ENCODE measurements at regions of chr14 and their contacts with region 1.

Region 1: GRCh38 chr14:30214461-30215090 is 286.9 kb upstream of the PRKD1 start:
- DNase-seq: no peak
- H3K4me3 ChIP-seq: peak overlapping the region in 1 of 2 donors; percentile 23
- H3K27ac ChIP-seq: no peak overlapping the region
- H3K4me1 ChIP-seq: peaks cover 0 to 3% of the 10 kb centered on the region in 2 donors
- H3K27me3 ChIP-seq: no peaks in the 10 kb centered on the region
- CTCF ChIP-seq: peak; percentile 36 to 66 (median 65)

Region 2: DNA sequence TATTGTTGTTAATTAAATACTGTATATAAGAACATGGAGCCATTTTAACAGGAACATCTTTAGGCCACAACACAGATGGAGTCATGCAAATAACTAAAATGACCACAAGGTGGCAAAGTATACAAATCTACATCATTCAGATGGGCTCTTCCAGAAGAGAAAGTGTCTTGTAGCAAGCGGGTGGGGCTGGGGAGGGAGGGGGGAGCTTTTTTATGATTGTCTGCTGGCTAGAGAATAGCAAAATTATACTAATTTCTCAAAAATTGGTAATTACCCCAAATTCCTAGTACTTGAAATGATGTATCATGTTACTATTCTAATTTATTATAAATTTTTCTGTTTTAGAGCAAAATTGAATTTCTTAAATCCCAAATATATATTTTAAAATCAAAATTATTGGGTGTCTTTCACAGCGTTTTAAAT is 665.6 kb before region 1 on chr14:
- intact Hi-C with region 1: loop called (anchors 1 kb)
- DNase-seq: no peak
- H3K4me3 ChIP-seq: no peak overlapping the region
- H3K27ac ChIP-seq: no peak overlapping the region
- H3K4me1 ChIP-seq: no peaks in the 10 kb centered on the region
- H3K27me3 ChIP-seq: no peaks in the 10 kb centered on the region
- CTCF ChIP-seq: peak; percentile 27 to 68 (median 55)

Region 3: DNA sequence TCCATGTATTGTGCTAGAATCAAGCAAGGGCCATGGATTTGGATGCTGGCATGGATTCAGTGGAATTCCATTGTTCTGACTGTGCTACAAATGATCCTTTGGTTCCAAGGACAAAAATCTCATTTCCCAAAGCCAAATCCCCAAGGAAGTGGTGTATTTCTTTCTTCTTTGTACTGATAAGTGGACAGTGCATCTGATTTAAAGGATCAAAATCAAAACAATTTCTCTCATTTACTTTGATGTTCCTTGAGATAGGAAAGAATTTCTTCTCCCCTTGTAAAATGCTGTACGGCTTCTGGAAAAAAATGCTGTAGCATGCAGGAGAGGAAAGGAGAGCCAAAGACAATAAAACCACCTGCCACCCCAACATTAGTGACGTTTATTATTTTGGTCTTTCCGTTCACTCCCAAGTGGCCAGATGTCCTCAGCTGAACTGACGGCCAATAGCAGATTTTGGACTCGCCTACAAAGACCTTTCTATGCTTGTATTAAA is 472.6 kb before region 1 on chr14:
- intact Hi-C with region 1: loop called (anchors 10 kb)
- DNase-seq: peak in 1 of 2 donors; percentile 68
- H3K4me3 ChIP-seq: peak overlapping the region in 1 of 2 donors; percentile 18
- H3K27ac ChIP-seq: peak overlapping the region in 1 of 2 donors; percentile 49
- H3K4me1 ChIP-seq: peaks cover 0 to 18% of the 10 kb centered on the region in 2 donors
- H3K27me3 ChIP-seq: no peaks in the 10 kb centered on the region
- CTCF ChIP-seq: no peak

Region 4: DNA sequence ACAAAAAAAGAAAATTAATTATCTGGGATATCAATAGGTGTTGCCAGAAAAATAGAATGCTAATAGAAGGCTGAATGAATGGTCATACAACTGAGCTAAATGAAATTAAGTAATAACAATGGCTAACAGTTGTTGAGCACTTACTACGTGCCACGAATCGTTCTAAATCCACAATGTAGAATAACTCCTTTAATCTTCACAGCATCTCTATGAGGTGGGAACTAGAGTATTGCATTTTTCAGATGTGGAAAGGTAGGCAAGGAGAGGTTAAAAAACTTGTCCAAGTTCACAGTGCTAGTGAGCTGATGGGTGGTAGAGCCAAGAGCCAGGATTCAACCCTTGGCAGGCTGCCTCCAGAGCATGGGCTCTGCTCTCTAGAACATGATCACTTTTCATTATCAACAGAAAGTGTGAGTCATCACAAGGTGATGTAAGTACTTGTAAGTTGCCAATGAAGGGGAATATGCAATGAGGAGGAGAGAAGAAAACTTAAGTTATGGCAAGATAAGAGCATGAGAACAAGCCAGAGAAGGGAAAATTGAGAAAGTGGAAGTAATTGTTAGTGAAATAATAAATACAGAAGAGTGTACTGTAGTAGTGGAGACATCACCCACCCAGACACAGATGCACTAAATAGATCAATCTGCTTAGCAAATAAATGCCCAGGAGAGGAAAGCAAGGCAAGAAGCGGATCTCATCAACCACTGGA is 409.0 kb before region 1 on chr14:
- intact Hi-C with region 1: loop called (anchors 10 kb)
- DNase-seq: peak in 1 of 2 donors; percentile 76
- H3K4me3 ChIP-seq: no peak overlapping the region
- H3K27ac ChIP-seq: peak overlapping the region in 1 of 2 donors; percentile 30
- H3K4me1 ChIP-seq: peaks cover 0 to 8% of the 10 kb centered on the region in 2 donors
- H3K27me3 ChIP-seq: no peaks in the 10 kb centered on the region
- CTCF ChIP-seq: no peak

Region 5: DNA sequence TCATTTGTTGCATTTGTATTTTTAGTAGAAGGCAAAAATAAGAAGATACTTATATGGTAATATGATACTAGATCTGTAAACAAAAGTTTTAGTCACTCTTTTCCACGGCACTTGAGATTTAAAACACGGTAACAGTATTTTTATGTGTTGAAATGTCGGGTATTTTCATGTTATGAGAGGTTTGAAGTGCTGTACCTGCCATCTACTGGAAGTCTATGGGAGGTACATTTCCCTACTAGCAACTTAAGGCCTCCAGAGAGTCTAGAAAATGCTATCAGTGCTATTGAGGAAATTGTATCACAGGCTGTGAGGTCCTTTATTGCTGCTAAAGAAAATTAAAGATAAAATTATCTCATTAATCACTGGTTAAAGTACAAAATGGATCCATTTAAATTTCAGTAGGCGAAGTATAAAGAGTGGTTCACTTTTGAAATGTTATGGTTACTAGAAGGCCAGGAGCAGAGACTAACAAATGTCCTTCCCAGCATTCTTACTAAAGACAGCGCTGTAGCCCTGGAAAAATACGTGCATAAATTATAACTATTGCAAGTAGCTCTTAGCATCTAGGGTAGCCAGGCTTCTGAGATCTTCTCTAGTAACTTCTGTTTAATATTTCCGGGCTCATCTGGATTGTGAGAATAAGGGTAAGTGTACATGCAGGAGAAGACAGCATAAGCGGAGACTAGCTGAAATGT is 209.3 kb before region 1 on chr14:
- intact Hi-C with region 1: loop called (anchors 2 kb)
- DNase-seq: no peak
- H3K4me3 ChIP-seq: peak overlapping the region in 1 of 2 donors; percentile 21
- H3K27ac ChIP-seq: no peak overlapping the region
- H3K4me1 ChIP-seq: no peaks in the 10 kb centered on the region
- H3K27me3 ChIP-seq: no peaks in the 10 kb centered on the region
- CTCF ChIP-seq: peak; percentile 48 to 83 (median 64)

Region 6: DNA sequence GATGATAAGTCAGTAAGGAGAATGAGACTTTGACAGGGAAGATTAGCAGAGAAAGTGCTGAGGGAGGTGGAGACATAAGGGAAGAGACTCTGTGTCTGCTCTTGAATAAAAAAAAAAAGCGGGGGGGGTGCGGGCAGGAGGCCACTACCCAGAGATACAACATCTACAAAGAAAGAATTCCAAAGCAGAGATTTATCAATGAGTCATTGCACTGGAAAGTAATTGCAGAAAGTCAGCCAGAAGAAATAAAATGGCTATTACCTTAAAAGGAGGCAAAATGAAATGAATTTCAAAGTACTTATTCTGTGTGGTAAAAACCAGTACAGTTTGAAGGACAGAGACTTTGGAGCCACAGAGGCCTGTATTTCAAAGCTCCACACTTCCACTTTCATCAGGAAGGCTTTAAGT is 19.8 kb before region 1 on chr14:
- intact Hi-C with region 1: loop called (anchors 2 kb)
- DNase-seq: no peak
- H3K4me3 ChIP-seq: peak overlapping the region in 1 of 2 donors; percentile 9
- H3K27ac ChIP-seq: peak overlapping the region; percentile 68 to 86
- H3K4me1 ChIP-seq: peaks cover 3 to 22% of the 10 kb centered on the region in 2 donors
- H3K27me3 ChIP-seq: no peaks in the 10 kb centered on the region
- CTCF ChIP-seq: no peak

Measured in ascending aorta (tissue), 2 donors.